A673 (cell line): ENCODE measurements at regions of chr1 and their contacts with region 1.

Region 1: GRCh38 chr1:230310381-230311163 is 115.6 kb downstream of the PGBD5 start:
- DNase-seq: peak; percentile 81
- H3K4me3 ChIP-seq: no peak overlapping the region
- H3K27ac ChIP-seq: no peak overlapping the region
- H3K4me1 ChIP-seq: peaks cover 16% of the 10 kb centered on the region
- H3K27me3 ChIP-seq: no peaks in the 10 kb centered on the region
- CTCF ChIP-seq: peak; percentile 97

Region 2: DNA sequence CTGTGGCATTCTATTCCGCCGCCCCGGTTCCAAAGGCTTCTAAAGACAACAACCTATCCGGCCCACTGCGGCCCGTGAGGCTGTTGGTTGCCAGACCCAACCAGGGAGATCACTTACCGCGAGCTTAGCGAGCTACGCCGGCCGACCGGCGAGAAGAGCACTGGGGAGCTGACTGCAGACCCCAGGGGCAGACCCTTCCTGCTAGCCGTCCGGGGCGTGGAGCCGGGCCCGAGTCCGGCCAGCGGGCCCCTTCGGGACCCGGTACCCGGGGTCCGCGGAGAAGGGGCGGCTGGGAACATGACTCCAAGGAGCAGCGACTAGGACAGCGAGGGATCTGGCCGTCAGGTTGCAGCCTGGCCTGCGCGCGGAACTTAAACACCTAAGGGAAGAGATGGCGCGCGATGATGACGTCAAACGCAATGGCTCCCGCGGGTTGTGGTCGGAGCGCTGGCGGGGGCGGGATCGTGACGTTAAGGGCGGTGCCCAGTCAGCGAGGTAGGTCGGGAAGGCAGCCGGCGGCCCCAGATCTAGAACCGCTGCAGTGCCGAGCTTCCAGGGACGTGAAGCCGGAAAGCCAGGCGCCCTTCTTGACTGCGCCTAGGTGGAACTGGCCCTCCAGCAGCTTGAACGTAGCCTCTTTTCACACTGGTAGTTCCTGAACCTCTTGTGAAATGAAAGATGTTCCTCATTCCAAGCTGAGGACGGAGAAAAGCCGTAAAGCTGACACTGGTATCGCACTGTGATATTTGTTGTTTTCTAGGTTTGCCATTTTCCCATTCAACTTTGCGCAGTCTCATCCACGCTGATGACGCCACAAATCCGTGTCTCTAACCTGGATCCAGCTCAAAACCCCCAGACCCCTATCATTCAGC is 802.4 kb before region 1 on chr1 and contains the start of gene NUP133:
- CTCF ChIA-PET with region 1: no interaction called
- POLR2A ChIA-PET with region 1: no interaction called
- intact Hi-C with region 1: loop called (anchors 5 kb)
- DNase-seq: peak; percentile 99
- H3K4me3 ChIP-seq: peak within 1 kb of the TSS; percentile 93
- H3K27ac ChIP-seq: peak within 1 kb of the TSS; percentile 93
- H3K4me1 ChIP-seq: peaks cover 10% of the 10 kb centered on the region
- H3K27me3 ChIP-seq: no peaks in the 10 kb centered on the region
- CTCF ChIP-seq: no peak
- total RNA-seq, gene NUP133: 59.0 and 67.9 TPM in 2 replicates

Region 3: GRCh38 chr1:229714964-229715603 is 595.5 kb before region 1 on chr1:
- CTCF ChIA-PET with region 1: no interaction called
- POLR2A ChIA-PET with region 1: no interaction called
- intact Hi-C with region 1: loop called (anchors 5 kb)
- DNase-seq: peak; percentile 34
- H3K4me3 ChIP-seq: no peak overlapping the region
- H3K27ac ChIP-seq: no peak overlapping the region
- H3K4me1 ChIP-seq: peaks cover 6% of the 10 kb centered on the region
- H3K27me3 ChIP-seq: no peaks in the 10 kb centered on the region
- CTCF ChIP-seq: peak; percentile 53

Region 4: DNA sequence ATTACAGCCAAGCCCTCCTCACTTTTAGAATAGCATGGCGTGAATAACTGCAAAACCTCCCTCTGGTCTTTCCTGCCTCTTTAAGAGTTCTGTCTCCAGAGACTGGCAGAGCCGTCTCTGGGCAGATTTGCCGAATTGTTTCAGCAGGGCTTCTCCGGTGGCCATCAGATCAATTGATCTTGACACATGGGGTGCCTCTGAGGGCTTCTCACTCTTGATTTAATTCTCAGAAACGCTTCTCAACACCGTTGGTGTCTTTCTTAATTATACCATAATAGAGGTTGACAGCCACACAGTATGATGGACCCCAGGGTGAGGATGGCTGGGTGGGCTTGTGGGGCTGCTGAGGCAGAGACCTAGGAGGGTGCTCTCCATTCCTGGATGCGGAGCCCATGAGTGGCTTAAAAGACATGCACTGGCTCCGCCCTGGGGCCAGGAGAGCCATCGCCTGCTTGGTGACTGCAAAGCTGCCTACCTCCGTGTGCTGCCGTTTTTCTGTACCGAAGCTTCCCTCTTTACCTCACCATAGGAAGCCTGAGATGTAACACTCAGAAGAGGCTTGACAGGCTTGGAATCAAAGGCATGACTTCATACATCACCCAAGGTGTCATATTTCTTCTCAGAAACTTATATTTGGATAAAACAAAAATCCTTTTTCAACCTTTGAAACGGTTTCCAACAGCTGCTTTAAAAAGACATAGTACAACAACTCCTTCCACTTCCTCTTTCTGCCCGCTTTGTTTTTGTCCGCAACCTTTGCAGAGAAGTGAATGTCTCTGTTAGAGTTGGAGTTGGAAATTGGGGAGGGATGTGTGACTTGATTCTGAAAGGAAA is 160.6 kb before region 1 on chr1:
- CTCF ChIA-PET with region 1: no interaction called
- POLR2A ChIA-PET with region 1: no interaction called
- intact Hi-C with region 1: no loop called
- DNase-seq: no peak
- H3K4me3 ChIP-seq: no peak overlapping the region
- H3K27ac ChIP-seq: peak overlapping the region; percentile 49
- H3K4me1 ChIP-seq: peaks cover 47% of the 10 kb centered on the region
- H3K27me3 ChIP-seq: no peaks in the 10 kb centered on the region
- CTCF ChIP-seq: no peak

Region 5: DNA sequence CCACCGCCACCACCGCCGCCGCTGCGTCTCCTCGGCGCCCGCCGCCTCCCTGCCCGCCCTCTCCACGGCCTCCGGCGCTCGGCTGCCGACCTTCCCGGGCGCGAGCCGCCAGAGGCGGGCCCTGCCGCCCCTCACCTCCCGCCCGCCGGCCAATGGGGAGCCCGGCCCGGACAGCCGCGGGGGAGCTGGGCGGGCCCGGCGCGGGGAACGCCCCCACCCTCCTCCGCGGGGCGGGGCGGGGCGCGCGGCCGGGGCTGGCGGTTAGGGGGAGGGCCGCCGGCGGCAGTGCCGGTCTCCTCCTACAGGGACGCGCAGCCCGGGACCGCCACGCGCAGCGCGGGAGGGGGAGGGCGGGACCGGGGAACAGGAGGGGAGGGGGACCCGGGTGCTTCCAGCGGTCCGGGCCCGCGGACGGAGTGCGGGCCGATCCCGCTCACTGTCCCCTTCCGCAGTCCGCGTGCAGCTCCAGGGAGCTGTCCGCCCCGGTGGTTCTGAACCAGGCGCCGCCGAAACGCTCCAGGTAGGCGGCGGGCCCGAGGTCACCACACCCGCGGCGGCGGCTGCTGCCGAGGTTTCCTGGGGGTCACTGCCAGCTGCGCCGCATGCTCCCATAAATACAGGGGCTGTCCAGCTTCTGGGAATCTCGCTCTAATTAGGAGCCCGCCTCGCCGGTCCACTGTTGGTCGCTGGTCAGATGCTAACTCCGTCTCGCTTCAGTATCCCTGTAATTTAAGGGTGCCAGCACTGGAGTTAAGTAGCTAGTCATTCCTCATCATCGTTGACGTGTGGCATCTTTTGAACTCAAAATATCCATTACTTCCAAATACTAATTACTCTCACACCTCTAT is 115.9 kb after region 1 on chr1 and contains the start of gene PGBD5:
- CTCF ChIA-PET with region 1: no interaction called
- POLR2A ChIA-PET with region 1: no interaction called
- intact Hi-C with region 1: no loop called
- DNase-seq: peak; percentile 75
- H3K4me3 ChIP-seq: peak within 1 kb of the TSS; percentile 38
- H3K27ac ChIP-seq: no peak within 1 kb of the TSS
- H3K4me1 ChIP-seq: peaks cover 5% of the 10 kb centered on the region
- H3K27me3 ChIP-seq: peaks cover 77% of the 10 kb centered on the region
- CTCF ChIP-seq: no peak
- total RNA-seq, gene PGBD5: 0.22 and 0.52 TPM in 2 replicates